ENCODE measurements at regions of chr12 and their contacts with region 1.

Region 1: DNA sequence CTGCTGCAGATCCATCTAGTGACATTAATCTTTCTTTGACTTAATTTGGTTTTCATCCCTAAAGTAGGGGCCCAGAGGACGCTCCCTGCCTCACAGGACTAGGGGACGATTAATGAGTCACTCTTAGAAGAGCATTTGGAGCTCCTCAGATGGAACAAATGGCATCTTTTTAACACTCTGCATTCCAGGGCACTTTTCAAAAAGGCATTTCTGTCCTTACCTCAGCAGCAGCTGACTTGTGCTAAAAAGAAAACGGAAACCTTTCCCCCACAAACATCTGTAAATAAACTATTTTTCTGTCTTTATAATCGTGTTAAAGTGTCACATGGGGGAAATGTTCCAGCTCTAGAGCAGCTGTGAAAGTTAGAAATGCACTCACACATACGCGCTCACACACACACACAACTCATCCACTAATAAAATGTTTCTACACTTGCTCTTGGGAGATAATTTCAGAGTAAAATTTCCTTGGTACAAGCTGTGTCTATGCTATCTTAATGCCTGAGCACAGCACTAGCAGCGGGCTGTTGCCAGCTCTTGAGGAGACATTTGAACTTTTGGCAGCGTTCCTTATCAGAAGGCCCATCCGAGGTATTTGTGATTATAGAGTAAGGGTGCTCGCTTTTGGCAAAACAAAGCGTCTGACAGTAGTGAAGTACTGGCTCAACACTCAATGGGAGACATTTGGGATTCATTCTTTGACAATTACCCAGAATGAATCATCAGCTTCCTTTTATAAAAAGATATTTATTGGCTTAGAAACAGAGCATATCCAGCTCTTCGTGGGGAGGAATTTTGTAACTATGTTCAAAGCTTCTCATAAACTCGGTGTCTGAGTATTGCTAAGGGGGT is 141.3 kb downstream of the PLXNC1 start:
- DNase-seq: no peak
- ATAC-seq: peak; percentile 46 to 76 (median 64)
- H3K4me3 ChIP-seq: peak overlapping the region in 1 of 10 donors; percentile 13
- H3K27ac ChIP-seq: peak overlapping the region; percentile 12 to 78 (median 66)
- H3K4me1 ChIP-seq: peaks cover 4 to 33% (median 23%) of the 10 kb centered on the region in 9 donors
- H3K27me3 ChIP-seq: no peaks in the 10 kb centered on the region
- CTCF ChIP-seq: no peak

Region 2: DNA sequence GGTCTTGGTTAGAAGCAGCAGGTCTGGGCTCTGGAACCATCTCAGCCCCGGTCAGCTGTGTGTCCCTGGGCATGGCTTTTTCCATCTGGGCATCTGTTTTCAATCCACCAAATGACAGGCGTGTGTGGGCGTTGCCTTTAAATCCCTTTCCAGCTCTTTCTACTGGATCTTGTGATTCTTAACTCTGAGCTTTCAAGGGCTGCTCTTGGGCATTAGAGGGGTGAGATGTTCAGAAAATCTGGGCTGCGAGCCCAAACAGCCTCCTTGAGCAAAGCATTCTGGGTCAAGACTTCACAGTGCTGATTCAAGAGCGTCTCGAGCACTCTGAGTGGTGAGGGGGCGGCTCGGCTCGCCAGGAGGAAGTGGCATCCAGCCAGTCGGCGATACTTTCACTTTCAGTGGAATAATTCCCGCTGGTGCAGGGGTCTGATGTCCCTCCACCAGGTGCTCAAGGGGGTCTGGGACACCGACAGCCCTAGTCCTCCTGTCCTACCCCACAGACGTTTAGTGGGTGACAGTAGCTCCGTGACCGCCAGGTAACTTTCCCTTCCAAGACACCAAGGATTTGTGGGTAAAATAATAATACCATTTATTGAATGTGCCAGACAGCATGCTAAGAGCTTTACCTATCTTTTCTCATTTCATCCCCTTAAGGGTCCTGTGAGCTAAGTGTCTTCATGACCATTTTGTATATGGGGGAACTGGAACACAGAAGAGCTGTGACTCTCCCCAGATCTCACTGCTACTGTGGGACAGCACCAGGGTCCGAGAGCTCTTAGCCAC is 27.3 kb before region 1 on chr12:
- intact Hi-C with region 1: loop called in 1 of 10 experiments (anchors 5 kb)
- DNase-seq: peak; percentile 80 to 84
- ATAC-seq: peak; percentile 78 to 92 (median 86)
- H3K4me3 ChIP-seq: peak overlapping the region in 9 of 10 donors; percentile 14 to 64 (median 58)
- H3K27ac ChIP-seq: peak overlapping the region; percentile 8 to 94 (median 85)
- H3K4me1 ChIP-seq: peaks cover 0 to 71% (median 38%) of the 10 kb centered on the region in 9 donors
- H3K27me3 ChIP-seq: no peaks in the 10 kb centered on the region
- CTCF ChIP-seq: no peak